Activated CD8-positive, alpha-beta T cell treated with anti-CD3 and anti-CD28 coated beads, Interleukin-2, amount 10 ng/mL, durations not matched to agents 7 days and 5 days (primary cell): ENCODE measurements at regions of chr17 and their contacts with region 1.

Region 1: GRCh38 chr17:30093463-30094147 is 23.0 kb upstream of the NSRP1 start:
- DNase-seq: peak; percentile 59
- ATAC-seq: peak; percentile 70
- H3K4me3 Mint-ChIP-seq: no peak overlapping the region
- H3K27ac Mint-ChIP-seq: no peak overlapping the region
- H3K4me1 Mint-ChIP-seq: peaks cover 7% of the 10 kb centered on the region
- H3K27me3 Mint-ChIP-seq: peaks cover 31% of the 10 kb centered on the region

Region 2: DNA sequence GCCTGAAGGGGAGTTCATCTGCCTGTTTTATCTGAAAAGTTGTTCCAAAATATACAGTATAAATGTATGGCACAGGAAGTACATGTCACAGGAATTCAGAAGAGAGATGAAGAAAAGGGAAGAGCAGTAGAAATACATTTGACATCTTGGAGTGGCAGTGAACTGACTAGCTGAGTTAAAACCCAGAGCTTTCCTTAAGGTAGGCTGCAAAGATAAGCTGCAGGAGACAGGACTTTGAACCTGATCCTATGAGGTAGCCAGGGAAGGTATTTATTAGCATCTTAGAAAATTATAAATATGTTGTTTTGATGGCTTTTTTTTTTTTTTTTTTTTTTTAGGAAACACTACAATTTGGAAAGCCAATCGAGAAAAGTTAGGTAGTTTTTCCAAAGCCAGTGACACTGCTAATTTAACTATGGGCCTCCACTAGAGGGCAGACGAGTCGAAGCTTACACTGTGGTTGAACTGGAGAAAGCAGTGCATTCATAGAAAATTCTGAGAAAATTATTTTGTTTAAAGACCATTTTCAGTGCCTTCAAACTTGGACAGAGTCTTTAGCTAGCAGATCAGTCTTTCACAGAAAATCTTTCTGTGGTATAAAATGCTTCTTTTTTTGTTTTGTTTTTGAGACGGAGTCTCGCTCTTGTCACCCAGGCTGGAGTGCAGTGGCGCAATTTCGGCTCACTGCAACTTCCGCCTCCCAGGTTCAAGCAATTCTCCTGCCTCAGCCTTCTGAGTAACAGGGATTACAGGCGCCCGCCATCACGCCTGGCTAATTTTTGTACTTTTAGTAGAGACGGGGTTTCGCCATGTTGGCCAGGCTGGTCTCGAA is 285.9 kb before region 1 on chr17:
- CTCF ChIA-PET with region 1: interaction called, 13 read pairs
- POLR2A ChIA-PET with region 1: no interaction called
- DNase-seq: peak; percentile 82
- ATAC-seq: peak; percentile 74
- H3K4me3 Mint-ChIP-seq: no peak overlapping the region
- H3K27ac Mint-ChIP-seq: no peak overlapping the region
- H3K4me1 Mint-ChIP-seq: peaks cover 21% of the 10 kb centered on the region
- H3K27me3 Mint-ChIP-seq: no peaks in the 10 kb centered on the region

Region 3: DNA sequence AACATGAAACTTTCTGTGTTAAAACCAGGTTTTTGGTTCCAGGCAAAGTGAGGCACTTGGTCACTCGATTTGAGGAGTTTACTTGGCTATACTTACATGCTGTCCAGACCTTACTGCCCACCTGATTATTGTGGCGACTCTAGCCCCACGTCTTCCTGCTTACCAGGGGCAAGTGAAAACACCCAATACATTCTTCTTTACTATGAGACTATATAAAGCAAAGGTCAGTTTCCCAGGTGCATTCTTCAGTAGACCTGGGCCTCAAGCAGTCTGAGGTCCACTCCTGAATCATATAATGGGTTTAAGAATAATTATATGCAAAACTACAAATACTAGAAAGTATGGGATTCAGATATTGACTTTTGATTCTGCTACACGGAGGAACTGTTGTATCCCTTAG is 65.9 kb before region 1 on chr17:
- CTCF ChIA-PET with region 1: interaction called, 25 read pairs
- POLR2A ChIA-PET with region 1: no interaction called
- DNase-seq: no peak
- ATAC-seq: no peak
- H3K4me3 Mint-ChIP-seq: no peak overlapping the region
- H3K27ac Mint-ChIP-seq: no peak overlapping the region
- H3K4me1 Mint-ChIP-seq: no peaks in the 10 kb centered on the region
- H3K27me3 Mint-ChIP-seq: peaks cover 2% of the 10 kb centered on the region

Region 4: DNA sequence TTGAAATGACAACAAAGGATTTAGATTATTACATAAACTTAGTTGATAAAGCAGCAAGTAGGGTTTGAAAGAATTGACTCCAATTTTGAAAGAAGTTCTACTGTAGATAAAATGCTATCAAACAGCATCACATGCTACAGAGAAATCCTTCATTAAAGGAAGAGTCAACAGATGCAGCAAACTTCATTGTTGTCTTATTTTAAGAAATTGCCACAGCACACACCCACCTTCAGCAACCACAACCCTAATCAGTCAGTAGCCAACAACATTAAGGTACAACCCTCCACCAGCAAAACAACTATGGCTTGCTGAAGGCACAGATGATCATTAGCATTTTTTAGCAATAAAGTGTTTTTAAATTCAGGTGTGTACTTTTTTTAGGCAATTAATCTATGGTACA is 52.1 kb before region 1 on chr17:
- CTCF ChIA-PET with region 1: interaction called, 10 read pairs
- POLR2A ChIA-PET with region 1: no interaction called
- DNase-seq: no peak
- ATAC-seq: no peak
- H3K4me3 Mint-ChIP-seq: no peak overlapping the region
- H3K27ac Mint-ChIP-seq: no peak overlapping the region
- H3K4me1 Mint-ChIP-seq: peaks cover 6% of the 10 kb centered on the region
- H3K27me3 Mint-ChIP-seq: peaks cover 18% of the 10 kb centered on the region

Region 5: DNA sequence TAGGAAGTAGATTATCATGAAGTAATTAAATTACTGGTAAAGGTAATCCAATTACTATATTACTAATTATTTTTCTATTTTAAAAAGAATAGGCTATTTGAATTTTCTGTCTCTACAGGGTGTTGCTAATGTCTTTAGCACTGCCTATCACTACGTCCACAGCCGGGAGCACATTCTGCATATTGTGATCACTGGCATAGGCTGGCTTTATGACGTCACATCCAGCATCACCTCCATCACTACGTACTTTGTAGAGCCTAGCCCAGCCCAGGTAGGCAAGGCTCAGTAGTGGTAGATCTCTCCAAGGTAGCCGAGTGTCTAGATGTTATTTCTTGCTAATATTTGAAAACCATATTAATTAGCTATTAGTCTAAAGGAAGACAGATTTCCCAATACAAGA is 10.8 kb before region 1 on chr17:
- CTCF ChIA-PET with region 1: interaction called, 21 read pairs
- POLR2A ChIA-PET with region 1: no interaction called
- DNase-seq: no peak
- ATAC-seq: no peak
- H3K4me3 Mint-ChIP-seq: no peak overlapping the region
- H3K27ac Mint-ChIP-seq: no peak overlapping the region
- H3K4me1 Mint-ChIP-seq: no peaks in the 10 kb centered on the region
- H3K27me3 Mint-ChIP-seq: peaks cover 17% of the 10 kb centered on the region

Region 6: DNA sequence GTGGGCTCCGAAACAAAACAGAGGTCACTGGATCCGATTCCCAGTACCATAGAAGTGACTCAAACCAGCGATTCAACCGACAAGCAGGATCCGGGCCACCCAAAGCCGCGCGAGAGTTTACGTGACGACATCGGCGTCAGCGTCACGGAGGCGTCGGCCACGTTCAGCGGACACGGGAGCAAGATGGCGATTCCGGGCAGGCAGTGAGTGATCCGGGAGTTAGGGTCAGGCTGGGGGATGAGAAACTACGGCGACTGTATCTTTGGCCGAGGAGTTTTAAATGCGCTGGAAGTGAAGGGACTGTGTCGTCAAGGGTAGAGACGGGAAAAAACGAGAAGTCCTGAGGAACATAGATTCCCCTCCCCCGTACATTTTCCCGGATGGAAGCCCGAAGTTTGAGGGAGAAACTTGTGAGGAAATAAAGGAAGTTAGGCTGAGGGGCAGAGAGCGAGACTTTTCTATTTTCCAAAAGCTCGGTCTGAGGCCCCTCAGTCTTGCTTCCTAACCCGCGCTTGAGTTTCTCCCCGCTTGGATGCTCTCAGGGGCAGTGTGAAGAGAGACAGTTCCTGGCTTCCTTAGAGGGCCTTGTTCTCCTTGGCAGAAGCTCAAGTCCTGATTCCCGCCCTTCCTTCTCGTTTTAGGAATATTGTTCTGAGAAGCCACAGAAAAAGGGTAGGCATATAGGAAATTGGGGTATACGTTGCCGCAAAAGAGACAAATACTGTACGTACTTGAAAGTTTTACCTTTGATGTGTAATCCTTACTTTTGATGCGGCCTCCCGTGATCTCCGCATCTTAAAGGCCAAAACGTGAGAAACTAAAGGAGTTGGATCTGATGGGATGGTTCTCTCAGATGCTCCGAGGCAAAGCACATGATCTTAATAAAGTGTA is 23.3 kb after region 1 on chr17 and contains the start of gene NSRP1:
- CTCF ChIA-PET with region 1: interaction called, 10 read pairs
- POLR2A ChIA-PET with region 1: no interaction called
- DNase-seq: peak; percentile 97
- ATAC-seq: peak; percentile 92
- H3K4me3 Mint-ChIP-seq: peak within 1 kb of the TSS; percentile 95
- H3K27ac Mint-ChIP-seq: peak within 1 kb of the TSS; percentile 99
- H3K4me1 Mint-ChIP-seq: peaks cover 61% of the 10 kb centered on the region
- H3K27me3 Mint-ChIP-seq: no peaks in the 10 kb centered on the region
- total RNA-seq, gene NSRP1: 19.6 to 21.3 TPM

Region 7: DNA sequence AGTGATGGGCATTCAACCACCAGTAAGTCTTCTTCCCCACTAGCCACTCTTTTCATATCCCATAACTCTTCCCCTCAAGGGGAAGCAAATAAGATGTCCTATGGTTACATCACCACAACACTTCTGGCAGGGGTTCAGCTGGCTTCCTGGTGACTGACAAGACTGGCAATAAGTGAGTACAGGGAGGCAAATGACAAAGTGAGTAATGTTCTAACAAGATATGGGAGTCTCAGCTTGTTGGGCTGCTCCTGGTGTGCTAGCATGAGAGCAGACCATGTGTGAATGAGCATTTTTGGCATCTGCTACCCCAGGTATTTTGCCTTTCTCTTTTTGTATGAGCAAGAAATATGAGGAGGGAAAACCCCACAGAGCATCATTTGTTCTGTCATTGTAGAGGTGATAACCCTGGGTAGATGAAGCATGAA is 230.3 kb after region 1 on chr17:
- CTCF ChIA-PET with region 1: interaction called, 15 read pairs
- POLR2A ChIA-PET with region 1: no interaction called
- DNase-seq: peak; percentile 41
- ATAC-seq: peak; percentile 67
- H3K4me3 Mint-ChIP-seq: peak overlapping the region; percentile 34
- H3K27ac Mint-ChIP-seq: peak overlapping the region; percentile 35
- H3K4me1 Mint-ChIP-seq: peaks cover 26% of the 10 kb centered on the region
- H3K27me3 Mint-ChIP-seq: peaks cover 4% of the 10 kb centered on the region